CD8-positive, alpha-beta T cell (primary cell): ENCODE measurements at regions of chr20 and their contacts with region 1.

Region 1: DNA sequence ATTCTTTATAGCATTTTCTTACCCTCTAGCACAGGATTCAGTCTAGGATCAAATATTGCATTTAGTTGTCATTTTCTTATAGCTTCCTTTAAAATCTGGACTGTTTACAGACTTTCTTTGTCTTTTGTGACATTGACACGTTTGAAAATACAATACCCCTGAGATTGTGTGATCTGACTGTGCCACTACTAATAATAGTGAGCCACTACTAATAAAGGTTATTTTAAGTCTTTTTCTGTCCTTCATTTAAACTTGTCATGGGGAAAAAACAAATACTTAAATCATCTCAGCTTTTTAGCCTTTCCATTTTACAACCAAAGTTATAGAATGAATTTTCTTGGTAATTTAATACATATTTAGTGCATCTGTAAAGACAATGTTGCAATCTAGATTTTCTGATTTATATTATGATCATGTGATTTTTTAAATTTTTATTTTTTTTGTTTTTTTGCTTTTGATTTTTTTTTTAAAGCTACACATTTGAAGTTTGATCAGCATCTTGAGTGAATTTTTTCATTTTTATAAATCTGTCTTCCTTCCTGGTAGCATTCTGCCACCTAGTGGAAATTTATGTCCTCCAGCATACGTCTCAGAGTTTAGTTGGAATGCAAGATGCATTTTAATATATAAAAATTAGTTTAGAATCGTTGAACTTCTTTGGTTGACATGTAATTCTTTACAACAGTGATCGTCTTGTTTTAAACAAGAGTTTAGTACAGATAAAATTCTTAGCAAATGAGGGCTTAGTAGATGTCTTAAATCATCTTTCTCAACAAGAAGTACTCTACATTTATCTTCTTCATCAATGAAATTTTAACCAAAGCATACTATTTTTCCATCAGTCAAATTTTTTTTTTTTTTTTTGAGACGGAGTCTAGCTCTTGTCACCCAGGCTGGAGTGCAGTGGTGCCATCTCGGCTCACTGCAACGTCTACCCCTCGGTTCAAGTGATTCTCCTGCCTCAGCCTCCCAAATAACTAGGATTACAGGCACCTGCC is 119.4 kb downstream of the NCOA3 start:
- DNase-seq: peak in 2 of 9 experiments; percentile 61 to 70
- ATAC-seq: no peak
- H3K4me3 ChIP-seq: no peak overlapping the region
- H3K4me3 Mint-ChIP-seq: no peak overlapping the region
- H3K27ac ChIP-seq: no peak overlapping the region
- H3K27ac Mint-ChIP-seq: no peak overlapping the region
- H3K4me1 ChIP-seq: no peaks in the 10 kb centered on the region
- H3K4me1 Mint-ChIP-seq: peaks cover 21% of the 10 kb centered on the region
- H3K27me3 ChIP-seq: no peaks in the 10 kb centered on the region
- H3K27me3 Mint-ChIP-seq: no peaks in the 10 kb centered on the region
- CTCF ChIP-seq: peak; percentile 97

Region 2: GRCh38 chr20:46666818-46667515 is 954.1 kb before region 1 on chr20:
- CTCF ChIA-PET with region 1: no interaction called
- POLR2A ChIA-PET with region 1: no interaction called
- intact Hi-C with region 1: no loop called
- DNase-seq: no peak
- ATAC-seq: no peak
- H3K4me3 ChIP-seq: no peak overlapping the region
- H3K4me3 Mint-ChIP-seq: no peak overlapping the region
- H3K27ac ChIP-seq: no peak overlapping the region
- H3K27ac Mint-ChIP-seq: no peak overlapping the region
- H3K4me1 ChIP-seq: no peaks in the 10 kb centered on the region
- H3K4me1 Mint-ChIP-seq: no peaks in the 10 kb centered on the region
- H3K27me3 ChIP-seq: no peaks in the 10 kb centered on the region
- H3K27me3 Mint-ChIP-seq: no peaks in the 10 kb centered on the region
- CTCF ChIP-seq: no peak

Region 3: GRCh38 chr20:47196091-47197081 is 424.7 kb before region 1 on chr20:
- CTCF ChIA-PET with region 1: interaction called, 6 read pairs
- POLR2A ChIA-PET with region 1: no interaction called
- intact Hi-C with region 1: loop called (anchors 1 kb)
- DNase-seq: peak; percentile 38 to 76 (median 71)
- ATAC-seq: peak; percentile 81
- H3K4me3 ChIP-seq: no peak overlapping the region
- H3K4me3 Mint-ChIP-seq: no peak overlapping the region
- H3K27ac ChIP-seq: no peak overlapping the region
- H3K27ac Mint-ChIP-seq: no peak overlapping the region
- H3K4me1 ChIP-seq: no peaks in the 10 kb centered on the region
- H3K4me1 Mint-ChIP-seq: peaks cover 4% of the 10 kb centered on the region
- H3K27me3 ChIP-seq: peaks cover 0 to 2% of the 10 kb centered on the region in 2 experiments
- H3K27me3 Mint-ChIP-seq: peaks cover 3% of the 10 kb centered on the region
- CTCF ChIP-seq: peak; percentile 90

Region 4: GRCh38 chr20:47481770-47482169 is 139.3 kb before region 1 on chr20:
- CTCF ChIA-PET with region 1: no interaction called
- POLR2A ChIA-PET with region 1: no interaction called
- intact Hi-C with region 1: loop called in 1 of 2 experiments (anchors 2 kb)
- DNase-seq: no peak
- ATAC-seq: no peak
- H3K4me3 ChIP-seq: no peak overlapping the region
- H3K4me3 Mint-ChIP-seq: no peak overlapping the region
- H3K27ac ChIP-seq: no peak overlapping the region
- H3K27ac Mint-ChIP-seq: no peak overlapping the region
- H3K4me1 ChIP-seq: peaks cover 2% of the 10 kb centered on the region
- H3K4me1 Mint-ChIP-seq: peaks cover 2% of the 10 kb centered on the region
- H3K27me3 ChIP-seq: no peaks in the 10 kb centered on the region
- H3K27me3 Mint-ChIP-seq: no peaks in the 10 kb centered on the region
- CTCF ChIP-seq: no peak

Region 5: GRCh38 chr20:47610247-47610944 is 10.7 kb before region 1 on chr20:
- CTCF ChIA-PET with region 1: interaction called, 28 read pairs
- POLR2A ChIA-PET with region 1: no interaction called
- intact Hi-C with region 1: no loop called
- DNase-seq: peak in 8 of 9 experiments; percentile 47 to 79 (median 58)
- ATAC-seq: peak; percentile 89
- H3K4me3 ChIP-seq: no peak overlapping the region
- H3K4me3 Mint-ChIP-seq: no peak overlapping the region
- H3K27ac ChIP-seq: peak overlapping the region in 1 of 2 experiments; percentile 37
- H3K27ac Mint-ChIP-seq: peak overlapping the region; percentile 63
- H3K4me1 ChIP-seq: peaks cover 34% of the 10 kb centered on the region
- H3K4me1 Mint-ChIP-seq: peaks cover 72% of the 10 kb centered on the region
- H3K27me3 ChIP-seq: no peaks in the 10 kb centered on the region
- H3K27me3 Mint-ChIP-seq: no peaks in the 10 kb centered on the region
- CTCF ChIP-seq: no peak